Heart left ventricle (tissue), 16 donors: ENCODE measurements at regions of chr2 and their contacts with region 1.

Region 1: DNA sequence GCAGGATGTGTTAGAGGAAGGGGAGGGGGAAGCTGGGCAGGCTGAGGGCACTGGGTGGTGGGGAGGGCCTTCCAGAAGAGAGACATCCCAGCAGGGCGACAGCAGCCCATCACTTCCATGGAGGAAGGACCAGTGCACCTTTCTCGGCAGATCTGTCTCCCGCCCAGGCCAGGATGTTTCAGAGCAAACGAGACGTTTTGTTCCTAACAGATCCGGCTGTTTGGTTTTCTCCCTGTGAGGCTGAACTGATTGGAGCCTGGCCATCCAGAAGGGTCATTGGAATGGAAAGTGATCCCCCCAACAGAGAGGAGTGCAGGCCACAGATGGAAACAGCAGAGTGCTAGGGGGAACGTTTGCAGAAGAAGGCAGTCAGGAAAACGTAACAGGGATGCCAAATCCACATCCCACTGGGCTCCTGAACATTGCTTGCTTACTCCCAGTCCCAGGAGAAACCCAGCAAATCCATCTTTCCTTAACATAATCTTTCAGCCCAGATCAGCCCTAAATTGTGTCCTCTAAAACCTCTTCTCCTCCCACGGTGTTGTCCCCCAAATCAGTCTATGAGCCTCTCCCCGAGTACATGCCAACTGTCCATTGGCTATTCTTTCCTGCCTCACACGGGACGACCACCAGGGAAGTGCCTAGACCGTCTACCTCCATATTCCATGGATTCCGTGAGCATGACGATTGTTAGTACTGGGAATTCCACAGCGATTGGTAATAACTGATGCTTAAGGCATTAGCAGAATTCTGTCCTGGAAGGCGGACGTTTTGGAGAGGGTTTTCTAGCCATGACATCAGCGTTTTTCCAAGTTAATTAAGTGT is 126.8 kb downstream of the SEPTIN10 start:
- DNase-seq: peak in 2 of 5 donors; percentile 12 to 19
- ATAC-seq: no peak
- H3K4me3 ChIP-seq: no peak overlapping the region
- H3K27ac ChIP-seq: no peak overlapping the region
- H3K4me1 ChIP-seq: peaks cover 0 to 24% (median 20%) of the 10 kb centered on the region in 12 donors
- H3K27me3 ChIP-seq: no peaks in the 10 kb centered on the region
- CTCF ChIP-seq: no peak
- POLR2A ChIP-seq: no peak

Region 2: DNA sequence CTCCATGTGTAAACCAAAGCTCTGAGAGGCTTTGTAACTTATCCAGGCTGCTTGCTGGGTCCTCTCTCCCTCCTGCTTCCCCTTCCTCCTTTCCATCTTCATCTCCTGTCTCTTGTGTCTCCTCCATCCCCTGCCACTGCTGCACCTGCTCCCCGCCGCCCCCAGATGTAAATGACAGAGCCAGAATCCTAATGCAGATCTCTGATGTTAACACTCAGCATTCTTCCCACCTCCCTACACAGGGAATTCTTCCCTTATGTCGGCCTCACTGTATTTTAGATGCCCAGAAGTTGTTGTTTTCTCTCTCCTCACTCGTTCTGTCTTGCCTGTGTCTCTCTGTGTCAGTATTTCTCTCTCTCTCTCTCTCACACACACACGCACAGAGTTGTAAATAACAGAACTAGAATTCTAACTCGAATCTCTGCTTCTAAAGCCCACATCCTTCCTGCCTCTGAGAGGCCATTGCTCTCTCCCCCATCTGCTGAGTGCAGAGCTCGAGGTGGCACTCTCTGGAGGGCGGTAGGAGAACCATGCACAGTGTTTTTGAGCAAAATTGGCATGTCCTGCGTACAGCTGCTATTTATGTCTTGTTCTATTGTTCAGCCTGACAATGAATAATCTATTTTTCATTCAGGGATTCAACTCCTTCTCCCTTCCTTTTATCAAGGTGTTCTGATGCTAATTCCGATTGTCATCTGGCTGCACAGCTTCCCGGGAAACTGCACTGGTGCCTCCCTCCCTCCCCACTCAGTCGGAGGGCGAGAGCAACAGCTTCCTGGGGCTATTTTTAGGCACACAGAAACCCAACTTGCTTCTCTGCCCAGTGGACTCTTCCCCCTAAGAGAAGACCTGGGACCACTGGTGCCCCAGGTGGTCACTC is 138.0 kb before region 1 on chr2:
- intact Hi-C with region 1: loop called in 1 of 10 experiments (anchors 10 kb)
- DNase-seq: no peak
- ATAC-seq: peak; percentile 34 to 59 (median 50)
- H3K4me3 ChIP-seq: no peak overlapping the region
- H3K27ac ChIP-seq: peak overlapping the region in 3 of 12 donors; percentile 37 to 61 (median 57)
- H3K4me1 ChIP-seq: peaks cover 9 to 44% (median 31%) of the 10 kb centered on the region in 12 donors
- H3K27me3 ChIP-seq: no peaks in the 10 kb centered on the region
- CTCF ChIP-seq: no peak
- POLR2A ChIP-seq: no peak

Region 3: GRCh38 chr2:109438773-109439389 is 48.0 kb before region 1 on chr2:
- intact Hi-C with region 1: loop called in 2 of 10 experiments (anchors 10 kb)
- DNase-seq: peak in 4 of 5 donors; percentile 25 to 82 (median 60)
- ATAC-seq: peak; percentile 64 to 87 (median 80)
- H3K4me3 ChIP-seq: no peak overlapping the region
- H3K27ac ChIP-seq: peak overlapping the region in 10 of 12 donors; percentile 17 to 79 (median 42)
- H3K4me1 ChIP-seq: peaks cover 5 to 42% (median 27%) of the 10 kb centered on the region in 12 donors
- H3K27me3 ChIP-seq: no peaks in the 10 kb centered on the region
- CTCF ChIP-seq: no peak
- POLR2A ChIP-seq: no peak

Region 4: DNA sequence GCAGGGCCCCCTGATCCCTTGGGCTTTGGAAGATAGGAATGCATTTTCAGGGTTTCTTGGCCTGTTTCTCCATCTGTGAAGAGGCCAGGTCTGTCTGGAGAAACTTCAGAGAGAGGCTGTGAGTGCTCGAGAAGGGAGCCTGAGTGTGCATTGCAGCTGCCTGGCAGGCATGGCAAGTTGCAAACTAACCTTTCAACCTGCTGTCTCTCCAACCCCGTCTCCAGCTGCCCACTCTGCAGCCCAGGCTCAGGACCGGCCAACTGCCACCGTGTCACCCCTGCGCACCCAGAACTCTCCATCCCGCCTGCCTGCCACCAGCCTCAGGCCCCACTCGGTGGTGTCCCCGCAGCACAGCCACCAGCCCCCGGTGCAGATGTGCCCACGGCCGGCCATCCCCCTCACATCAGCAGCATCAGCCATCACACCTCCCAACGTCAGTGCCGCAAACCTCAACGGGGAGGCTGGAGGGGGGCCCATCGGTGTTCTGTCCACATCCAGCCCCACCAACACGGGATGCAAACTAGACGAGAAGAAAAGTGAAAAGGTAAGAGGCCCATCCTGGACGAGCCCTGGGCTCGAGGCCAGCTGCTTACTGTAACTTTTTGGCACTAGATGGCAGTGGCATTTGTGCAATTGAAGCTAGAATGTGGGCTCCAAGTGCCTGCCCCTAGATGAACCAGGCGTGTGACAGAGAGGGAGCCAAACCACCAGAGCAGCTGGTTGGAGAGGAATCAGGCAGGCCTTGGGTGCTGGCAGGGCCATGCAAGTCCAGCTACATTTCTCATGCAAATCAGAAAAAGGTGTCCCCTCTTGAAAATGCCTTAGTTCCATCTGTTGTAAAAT is 37.8 kb before region 1 on chr2:
- intact Hi-C with region 1: loop called in 3 of 10 experiments (anchors 5 to 10 kb)
- DNase-seq: peak; percentile 55 to 87 (median 70)
- ATAC-seq: peak; percentile 87 to 96 (median 90)
- H3K4me3 ChIP-seq: no peak overlapping the region
- H3K27ac ChIP-seq: peak overlapping the region in 8 of 12 donors; percentile 20 to 64 (median 38)
- H3K4me1 ChIP-seq: peaks cover 0 to 22% (median 12%) of the 10 kb centered on the region in 12 donors
- H3K27me3 ChIP-seq: no peaks in the 10 kb centered on the region
- CTCF ChIP-seq: peak in 3 of 12 donors; percentile 11 to 33 (median 18)
- POLR2A ChIP-seq: no peak